Right ventricle myocardium superior (tissue), 1 donor: ENCODE measurements at regions of chr13 and their contacts with region 1.

Region 1: DNA sequence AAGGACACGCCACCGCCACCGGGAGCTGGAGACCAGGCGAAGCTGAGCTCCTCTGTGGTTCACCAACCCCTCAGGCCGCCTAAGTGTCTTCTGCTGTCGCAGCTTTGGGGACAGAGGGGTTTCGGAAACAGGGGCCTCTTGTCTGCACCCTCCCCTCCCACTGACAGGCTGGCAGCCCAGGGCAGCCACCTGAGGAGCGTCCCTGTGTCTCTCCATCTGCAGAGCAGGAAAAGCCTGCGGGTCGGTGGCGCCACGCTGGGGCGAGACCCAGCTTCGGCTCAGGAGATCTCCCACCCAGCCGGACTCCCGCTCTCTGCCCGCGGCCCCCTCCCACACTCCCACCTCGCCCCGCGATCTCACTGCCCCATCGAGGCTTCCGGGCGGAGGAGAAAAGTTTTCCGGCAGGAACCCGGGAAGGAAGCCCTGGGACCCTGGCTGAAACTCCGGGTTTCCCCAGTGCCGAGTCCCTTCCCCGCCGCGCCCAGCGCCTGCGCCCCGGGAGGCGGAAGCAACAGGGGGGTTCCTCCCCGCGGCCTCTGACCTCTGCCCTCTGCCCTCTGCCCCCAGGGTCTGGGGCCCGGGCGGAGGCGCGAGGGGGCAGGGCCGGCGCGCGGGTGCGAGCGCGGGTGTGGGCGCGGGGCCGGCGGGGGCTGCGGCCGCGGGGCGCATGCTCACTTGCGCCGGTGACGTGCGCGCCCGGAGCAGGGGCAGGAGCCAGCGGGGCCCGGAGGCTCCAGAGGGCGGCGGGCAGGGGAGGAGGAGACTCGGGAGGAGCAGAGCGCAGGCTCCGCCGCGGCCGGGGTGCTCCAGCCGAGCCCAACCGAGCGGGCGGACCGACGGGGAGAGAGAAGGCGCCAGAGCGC is at the start of gene ATP11A:
- DNase-seq: peak; percentile 96
- ATAC-seq: peak; percentile 89
- total RNA-seq, gene ATP11A: 73.6 TPM

Region 2: GRCh38 chr13:112733661-112734379 is 44.3 kb after region 1 on chr13:
- intact Hi-C with region 1: loop called (anchors 5 kb)
- DNase-seq: no peak
- ATAC-seq: no peak